SK-N-SH (cell line): ENCODE measurements at regions of chr20 and their contacts with region 1.

Region 1: DNA sequence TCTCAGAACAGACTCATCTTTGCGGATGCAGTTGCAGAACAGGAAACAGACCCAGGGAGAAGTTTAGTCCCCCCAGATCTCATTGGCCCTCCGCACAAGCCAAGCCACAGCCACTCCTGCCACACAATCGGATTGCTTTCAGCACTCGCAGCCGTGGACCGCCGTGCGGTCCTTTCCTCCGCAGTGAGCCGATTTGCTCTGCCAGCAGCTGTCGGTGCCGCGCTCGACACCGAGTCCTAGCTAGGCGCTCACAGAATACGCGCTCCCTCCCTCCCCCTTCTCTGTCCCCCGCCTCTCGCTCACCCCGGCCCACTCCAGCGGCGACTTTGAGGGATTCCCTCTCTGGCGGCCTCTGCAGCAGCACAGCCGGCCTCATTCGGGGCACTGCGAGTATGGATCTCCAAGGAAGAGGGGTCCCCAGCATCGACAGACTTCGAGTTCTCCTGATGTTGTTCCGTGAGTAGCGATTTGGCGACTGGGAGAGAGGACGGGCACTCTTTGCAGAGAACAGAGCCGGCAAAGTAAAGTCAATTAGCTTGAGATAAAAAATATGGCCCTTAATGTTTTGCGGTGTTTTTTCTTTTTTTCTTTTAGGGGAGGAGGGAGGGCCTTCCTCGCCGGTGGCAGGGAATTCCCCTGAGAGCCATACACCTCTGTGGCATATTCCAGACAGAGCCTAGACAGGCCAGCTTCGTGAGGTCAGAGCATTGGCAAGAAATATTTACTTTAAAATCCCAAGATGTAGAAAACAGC is at the start of gene LAMP5:
- DNase-seq: peak; percentile 82
- H3K4me3 ChIP-seq: peak within 1 kb of the TSS; percentile 54 to 66
- H3K27ac ChIP-seq: peak within 1 kb of the TSS in 1 of 2 experiments; percentile 58; a peak in 2 of 4 replicates
- H3K4me1 ChIP-seq: peaks cover 0 to 19% of the 10 kb centered on the region in 2 experiments; a peak in 3 of 4 replicates
- H3K27me3 ChIP-seq: peaks cover 11% of the 10 kb centered on the region; the same call in 1 of the 2 replicates
- CTCF ChIP-seq: no peak
- EP300 ChIP-seq: no peak
- RAD21 ChIP-seq: no peak
- polyA plus RNA-seq, gene LAMP5: 4.8 and 10.1 TPM in 2 replicates

Region 2: GRCh38 chr20:9270831-9271230 is 243.8 kb before region 1 on chr20:
- CTCF ChIA-PET with region 1: no interaction called
- POLR2A ChIA-PET with region 1: no interaction called
- DNase-seq: no peak
- H3K4me3 ChIP-seq: no peak overlapping the region
- H3K27ac ChIP-seq: peak overlapping the region; percentile 77
- H3K4me1 ChIP-seq: peaks cover 3 to 17% of the 10 kb centered on the region in 2 experiments; a peak in 1 of 4 replicates
- H3K27me3 ChIP-seq: no peaks in the 10 kb centered on the region
- CTCF ChIP-seq: no peak
- EP300 ChIP-seq: peak in 1 of 2 experiments; percentile 34; a peak in 1 of 4 replicates
- RAD21 ChIP-seq: no peak

Region 3: DNA sequence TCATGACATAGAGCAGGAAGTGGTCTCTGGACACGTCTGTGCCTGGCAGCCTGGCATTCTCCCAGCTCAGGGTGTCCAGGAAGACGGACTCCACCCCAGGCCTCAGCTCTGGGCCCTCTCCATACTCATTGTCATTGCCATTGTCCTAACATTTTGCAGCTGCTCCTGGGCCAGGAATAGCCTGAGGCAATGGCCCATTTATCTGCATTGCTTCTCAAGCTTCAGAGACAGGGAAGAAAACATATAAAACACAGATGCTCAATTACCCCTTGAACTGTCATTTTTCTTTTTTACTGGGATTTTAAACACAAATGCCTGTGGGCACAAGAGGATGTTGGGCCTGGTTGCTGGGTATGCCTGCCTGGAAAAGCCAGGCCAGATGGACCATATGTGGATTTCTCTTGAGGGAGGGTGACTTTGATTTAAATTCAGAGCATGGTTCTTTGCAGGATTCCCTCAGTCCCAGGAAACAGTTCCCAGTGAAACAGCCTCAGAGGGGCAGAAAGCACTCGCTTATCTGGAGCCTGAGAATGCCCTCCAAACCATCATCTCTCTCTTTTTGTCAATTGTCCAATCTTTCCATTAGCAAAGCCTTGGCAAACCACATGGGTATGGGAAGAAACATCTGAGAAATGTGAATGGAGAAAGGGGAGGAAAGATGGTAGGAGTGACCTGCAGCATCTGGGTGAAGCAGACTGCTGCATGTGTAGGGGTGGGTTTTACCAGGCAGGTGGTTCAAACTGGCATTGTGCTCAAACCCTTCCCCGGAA is 17.6 kb after region 1 on chr20:
- CTCF ChIA-PET with region 1: interaction called, 21 read pairs
- POLR2A ChIA-PET with region 1: interaction called, 8 read pairs
- DNase-seq: peak; percentile 70
- H3K4me3 ChIP-seq: no peak overlapping the region
- H3K27ac ChIP-seq: peak overlapping the region; percentile 76 to 97
- H3K4me1 ChIP-seq: peaks cover 15 to 28% of the 10 kb centered on the region in 2 experiments
- H3K27me3 ChIP-seq: no peaks in the 10 kb centered on the region
- CTCF ChIP-seq: no peak
- EP300 ChIP-seq: peak; percentile 70 to 98
- RAD21 ChIP-seq: peak; percentile 55